Natural killer cell (primary cell): ENCODE measurements at regions of chr16 and their contacts with region 1.

Region 1: DNA sequence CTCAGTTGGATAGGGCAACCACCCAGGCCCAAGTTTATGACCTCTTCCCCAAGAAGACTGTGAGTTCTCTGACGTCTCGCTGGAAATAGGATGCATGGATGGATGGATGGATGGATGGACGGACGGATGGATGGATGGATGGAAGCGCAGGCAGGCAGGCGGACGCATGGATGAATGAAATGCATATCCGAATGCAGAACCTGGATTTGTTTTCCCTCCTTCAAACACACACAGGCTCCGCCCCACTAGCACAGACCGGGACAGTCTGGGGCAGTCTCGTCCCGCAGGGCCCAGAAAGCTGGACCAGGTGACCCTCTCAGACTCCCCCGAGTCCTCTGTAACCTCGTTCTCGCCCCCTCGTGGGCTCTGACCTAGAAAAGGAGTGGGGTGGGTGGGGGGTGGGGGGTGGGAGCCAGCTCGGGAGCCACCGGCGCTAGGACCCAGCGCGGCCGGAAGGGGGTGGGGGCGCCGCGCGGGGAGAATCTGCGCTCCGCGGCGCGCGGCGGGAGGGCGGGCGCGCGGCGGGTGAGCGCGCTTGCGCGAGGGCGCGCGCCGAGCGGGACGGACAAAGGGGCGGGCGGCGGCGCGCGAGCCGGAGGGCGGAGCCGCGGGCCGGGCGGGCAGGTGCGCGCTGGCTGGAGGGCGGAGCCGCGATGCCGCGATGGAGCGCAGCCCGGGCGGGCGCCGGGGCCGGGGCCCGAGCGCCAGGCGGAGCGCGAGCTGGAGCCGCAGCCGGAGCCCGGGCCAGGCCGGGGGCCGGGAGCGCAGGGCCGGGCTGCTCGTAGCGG is at the start of gene SBK1:
- DNase-seq: peak; percentile 88 to 95
- ATAC-seq: peak; percentile 94 to 96 (median 96)
- H3K4me3 ChIP-seq: peak within 1 kb of the TSS; percentile 96
- H3K4me3 Mint-ChIP-seq: peak within 1 kb of the TSS; percentile 93
- H3K27ac ChIP-seq: peak within 1 kb of the TSS; percentile 72
- H3K27ac Mint-ChIP-seq: peak within 1 kb of the TSS; percentile 72 to 85
- H3K4me1 ChIP-seq: peaks cover 82% of the 10 kb centered on the region
- H3K4me1 Mint-ChIP-seq: peaks cover 71 to 76% of the 10 kb centered on the region in 2 donors
- H3K27me3 ChIP-seq: no peaks in the 10 kb centered on the region
- H3K27me3 Mint-ChIP-seq: no peaks in the 10 kb centered on the region
- CTCF ChIP-seq: no peak
- total RNA-seq, gene SBK1: 59.3 to 60.9 (median 59.8) TPM

Region 2: GRCh38 chr16:28211712-28212534 is 80.1 kb before region 1 on chr16 and contains the start of gene XPO6:
- intact Hi-C with region 1: loop called (anchors 5 kb)
- DNase-seq: peak; percentile 98 to 99
- ATAC-seq: peak; percentile 87 to 98 (median 89)
- H3K4me3 ChIP-seq: peak within 1 kb of the TSS; percentile 79
- H3K4me3 Mint-ChIP-seq: peak within 1 kb of the TSS; percentile 94
- H3K27ac ChIP-seq: peak within 1 kb of the TSS; percentile 78
- H3K27ac Mint-ChIP-seq: peak within 1 kb of the TSS; percentile 84 to 89
- H3K4me1 ChIP-seq: peaks cover 32% of the 10 kb centered on the region
- H3K4me1 Mint-ChIP-seq: peaks cover 41% of the 10 kb centered on the region in 2 donors
- H3K27me3 ChIP-seq: no peaks in the 10 kb centered on the region
- H3K27me3 Mint-ChIP-seq: no peaks in the 10 kb centered on the region
- CTCF ChIP-seq: no peak
- total RNA-seq, gene XPO6: 233 to 321 (median 240) TPM

Region 3: DNA sequence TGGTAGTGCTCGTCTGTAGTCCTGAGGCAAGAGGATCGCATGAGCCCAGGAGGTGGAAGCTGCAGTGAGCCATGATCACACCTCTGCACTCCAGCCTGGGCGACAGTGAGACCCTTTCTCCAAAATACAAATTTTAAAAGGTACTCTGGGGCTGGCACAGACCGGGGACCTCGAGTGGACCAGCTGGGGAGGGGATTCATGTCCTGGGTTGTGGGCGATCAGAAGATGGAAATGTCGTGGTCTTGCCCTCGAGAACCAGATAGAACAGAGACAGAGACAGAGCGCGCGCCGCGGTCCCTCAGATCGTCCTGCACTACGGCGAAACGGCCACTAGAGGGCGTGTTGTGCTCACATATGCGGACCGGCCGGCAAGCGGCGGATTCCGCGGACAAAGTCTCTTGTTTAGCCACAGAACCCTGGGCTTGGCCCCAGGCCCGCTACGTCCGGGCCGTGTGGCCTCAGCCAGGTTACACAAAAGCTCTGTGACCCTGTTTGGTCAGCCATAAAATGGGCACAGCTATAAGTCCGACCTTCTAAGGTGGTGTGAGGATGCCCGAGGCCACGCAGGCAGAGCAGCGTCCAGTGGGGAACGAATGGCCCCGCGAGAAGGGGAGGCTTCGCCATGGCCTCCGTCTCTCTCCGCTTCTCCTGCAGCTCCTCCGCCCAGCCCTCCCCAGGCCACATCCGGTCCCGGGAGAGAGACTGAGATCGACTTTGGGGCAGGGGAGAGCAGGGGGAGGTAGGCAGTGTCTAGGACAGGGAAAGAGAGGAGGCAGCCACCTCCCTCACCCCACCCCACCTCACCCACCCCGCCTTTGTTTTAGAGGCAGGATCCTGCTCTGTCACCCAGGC is 14.3 kb before region 1 on chr16:
- intact Hi-C with region 1: loop called (anchors 1 kb)
- DNase-seq: peak; percentile 84 to 94
- ATAC-seq: peak; percentile 92 to 95 (median 94)
- H3K4me3 ChIP-seq: peak overlapping the region; percentile 28
- H3K4me3 Mint-ChIP-seq: peak overlapping the region; percentile 86
- H3K27ac ChIP-seq: no peak overlapping the region
- H3K27ac Mint-ChIP-seq: peak overlapping the region; percentile 81 to 84
- H3K4me1 ChIP-seq: peaks cover 31% of the 10 kb centered on the region
- H3K4me1 Mint-ChIP-seq: peaks cover 16 to 41% of the 10 kb centered on the region in 2 donors
- H3K27me3 ChIP-seq: no peaks in the 10 kb centered on the region
- H3K27me3 Mint-ChIP-seq: peaks cover 5 to 28% of the 10 kb centered on the region in 2 donors
- CTCF ChIP-seq: peak; percentile 96

Region 4: GRCh38 chr16:28309811-28310311 is 17.8 kb after region 1 on chr16:
- intact Hi-C with region 1: loop called (anchors 2 kb)
- DNase-seq: peak; percentile 87 to 93
- ATAC-seq: peak; percentile 88 to 93 (median 90)
- H3K4me3 ChIP-seq: no peak overlapping the region
- H3K4me3 Mint-ChIP-seq: peak overlapping the region; percentile 52
- H3K27ac ChIP-seq: peak overlapping the region; percentile 90
- H3K27ac Mint-ChIP-seq: peak overlapping the region; percentile 97 to 99
- H3K4me1 ChIP-seq: peaks cover 69% of the 10 kb centered on the region
- H3K4me1 Mint-ChIP-seq: peaks cover 62 to 78% of the 10 kb centered on the region in 2 donors
- H3K27me3 ChIP-seq: no peaks in the 10 kb centered on the region
- H3K27me3 Mint-ChIP-seq: no peaks in the 10 kb centered on the region
- CTCF ChIP-seq: no peak